Activated CD4-positive, alpha-beta memory T cell treated with anti-CD3 and anti-CD28 coated beads for 36 hours (primary cell): ENCODE measurements at regions of chr7 and their contacts with region 1.

Region 1: DNA sequence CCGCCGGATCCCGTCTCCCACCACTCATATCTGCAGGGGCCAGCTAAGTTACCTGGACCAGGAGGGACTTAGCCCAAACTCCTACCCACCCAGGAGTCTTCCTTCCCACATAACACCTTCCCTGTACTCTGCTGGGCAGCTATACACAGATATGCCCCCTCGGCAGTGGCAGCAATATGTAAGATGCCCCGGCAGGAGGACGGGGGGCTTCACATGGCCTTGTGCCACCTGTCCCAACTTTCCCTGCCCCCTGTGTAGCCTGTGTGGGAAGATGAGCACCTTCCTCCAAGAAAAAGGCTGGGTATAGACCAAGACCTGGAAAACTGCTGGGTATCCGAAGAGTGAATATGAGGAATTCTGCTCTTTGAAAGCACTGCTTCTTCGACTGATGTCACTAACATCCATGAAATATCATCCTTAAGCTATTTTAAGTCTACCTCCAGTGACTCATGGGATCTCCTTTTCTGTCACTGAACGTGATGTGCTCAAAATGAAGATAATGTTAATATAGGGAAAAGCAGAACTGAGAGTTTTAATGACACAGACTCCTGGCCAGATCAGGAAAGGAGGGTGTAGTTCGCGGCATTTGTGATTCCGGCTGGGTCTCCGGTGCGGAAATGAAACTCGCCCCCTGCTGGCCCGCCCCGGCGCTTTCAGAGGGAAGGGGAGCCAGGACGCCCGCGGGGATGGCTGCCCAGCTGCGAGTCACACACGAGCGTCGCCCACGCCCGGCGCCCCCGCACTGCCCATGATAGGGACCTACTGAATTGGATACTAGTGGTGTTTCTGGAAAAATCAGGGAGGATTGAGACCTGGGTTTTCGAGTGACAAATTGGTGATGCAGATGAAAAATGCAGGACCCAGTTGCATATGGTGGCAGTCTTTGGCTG is 256.9 kb upstream of the NFE2L3 start:
- DNase-seq: peak; percentile 75
- H3K4me3 Mint-ChIP-seq: peak overlapping the region; percentile 44
- H3K27ac Mint-ChIP-seq: no peak overlapping the region
- H3K4me1 Mint-ChIP-seq: peaks cover 26% of the 10 kb centered on the region
- H3K27me3 Mint-ChIP-seq: peaks cover 1% of the 10 kb centered on the region

Region 2: DNA sequence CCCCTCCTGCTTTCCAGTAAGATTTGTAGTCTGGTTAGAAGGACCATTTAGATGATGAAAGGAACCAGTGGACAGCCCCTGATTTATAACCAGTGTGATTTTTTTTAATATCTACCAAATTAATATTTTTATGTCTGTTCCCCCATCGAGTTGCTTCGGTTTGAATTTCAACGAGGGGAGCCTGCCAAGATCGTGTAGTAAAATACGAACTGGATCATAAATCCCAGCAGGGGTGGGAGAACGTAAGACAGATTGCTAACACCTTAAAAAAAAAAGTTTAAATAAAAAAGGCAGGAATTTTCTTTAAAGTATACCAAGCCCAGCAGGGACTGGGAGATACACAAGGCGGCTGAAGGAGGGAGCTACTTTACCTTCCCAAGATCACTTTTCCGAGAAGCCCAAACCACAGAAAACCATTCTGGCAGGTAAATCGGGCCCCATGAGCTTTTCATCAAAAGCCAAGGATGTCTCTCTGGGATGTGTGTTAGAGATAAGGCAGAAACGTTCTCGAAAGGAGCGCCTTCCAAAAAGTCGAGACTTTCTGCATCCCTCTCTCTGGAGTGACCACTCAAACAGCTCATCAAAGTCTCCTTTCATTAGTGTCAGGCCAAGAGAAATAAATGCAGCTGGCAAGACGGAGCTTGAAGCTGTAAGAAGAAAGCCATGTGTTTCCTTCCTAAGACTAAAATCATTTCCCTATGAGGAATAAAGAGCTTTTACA is 13.7 kb before region 1 on chr7:
- CTCF ChIA-PET with region 1: interaction called, 14 read pairs
- POLR2A ChIA-PET with region 1: no interaction called
- intact Hi-C with region 1: no loop called
- DNase-seq: no peak
- H3K4me3 Mint-ChIP-seq: no peak overlapping the region
- H3K27ac Mint-ChIP-seq: no peak overlapping the region
- H3K4me1 Mint-ChIP-seq: no peaks in the 10 kb centered on the region
- H3K27me3 Mint-ChIP-seq: peaks cover 20% of the 10 kb centered on the region

Region 3: DNA sequence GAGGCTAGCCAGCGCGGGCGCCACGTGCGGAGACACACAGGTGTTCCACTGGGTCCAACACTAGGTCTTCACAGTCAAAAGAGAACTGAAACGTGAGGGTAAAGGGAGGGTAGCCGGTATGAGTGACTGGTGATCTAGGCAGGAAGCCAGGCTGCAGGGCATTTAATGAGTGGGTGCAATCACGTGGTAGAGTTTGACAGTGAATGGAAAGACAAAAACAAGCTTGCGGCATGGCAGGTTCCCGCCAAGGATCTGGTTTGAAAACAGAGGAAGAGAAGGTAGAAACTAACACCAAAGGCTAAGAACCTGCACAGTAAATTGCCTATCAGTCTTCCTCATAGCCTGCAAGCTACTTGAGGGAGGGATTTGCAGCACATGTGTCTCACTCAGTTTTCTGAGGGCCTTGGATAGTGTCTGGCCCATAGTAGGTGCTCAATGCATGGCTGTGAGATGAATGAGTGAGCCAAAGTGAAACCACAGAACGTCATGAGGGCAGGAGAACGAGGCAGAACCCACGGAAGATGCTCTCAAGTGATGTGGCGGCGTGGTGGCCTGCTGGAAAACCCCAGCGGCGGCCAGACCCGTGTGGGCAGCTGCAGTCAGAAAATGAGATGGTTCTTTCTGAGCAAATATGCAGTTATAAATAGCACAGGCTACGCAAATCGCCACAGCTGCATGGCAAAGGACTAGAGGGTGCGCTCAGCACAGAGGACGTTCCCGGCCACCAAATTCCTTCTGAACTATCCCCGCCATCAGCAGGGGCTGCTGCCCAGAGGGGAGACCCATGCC is 73.3 kb after region 1 on chr7:
- CTCF ChIA-PET with region 1: interaction called, 7 read pairs
- POLR2A ChIA-PET with region 1: no interaction called
- intact Hi-C with region 1: loop called (anchors 2 kb)
- DNase-seq: peak; percentile 87
- H3K4me3 Mint-ChIP-seq: peak overlapping the region; percentile 7
- H3K27ac Mint-ChIP-seq: peak overlapping the region; percentile 55
- H3K4me1 Mint-ChIP-seq: peaks cover 23% of the 10 kb centered on the region
- H3K27me3 Mint-ChIP-seq: peaks cover 31% of the 10 kb centered on the region

Region 4: GRCh38 chr7:26090927-26091519 is 195.9 kb after region 1 on chr7:
- CTCF ChIA-PET with region 1: interaction called, 17 read pairs
- POLR2A ChIA-PET with region 1: no interaction called
- intact Hi-C with region 1: no loop called
- DNase-seq: no peak
- H3K4me3 Mint-ChIP-seq: no peak overlapping the region
- H3K27ac Mint-ChIP-seq: no peak overlapping the region
- H3K4me1 Mint-ChIP-seq: peaks cover 14% of the 10 kb centered on the region
- H3K27me3 Mint-ChIP-seq: no peaks in the 10 kb centered on the region

Region 5: DNA sequence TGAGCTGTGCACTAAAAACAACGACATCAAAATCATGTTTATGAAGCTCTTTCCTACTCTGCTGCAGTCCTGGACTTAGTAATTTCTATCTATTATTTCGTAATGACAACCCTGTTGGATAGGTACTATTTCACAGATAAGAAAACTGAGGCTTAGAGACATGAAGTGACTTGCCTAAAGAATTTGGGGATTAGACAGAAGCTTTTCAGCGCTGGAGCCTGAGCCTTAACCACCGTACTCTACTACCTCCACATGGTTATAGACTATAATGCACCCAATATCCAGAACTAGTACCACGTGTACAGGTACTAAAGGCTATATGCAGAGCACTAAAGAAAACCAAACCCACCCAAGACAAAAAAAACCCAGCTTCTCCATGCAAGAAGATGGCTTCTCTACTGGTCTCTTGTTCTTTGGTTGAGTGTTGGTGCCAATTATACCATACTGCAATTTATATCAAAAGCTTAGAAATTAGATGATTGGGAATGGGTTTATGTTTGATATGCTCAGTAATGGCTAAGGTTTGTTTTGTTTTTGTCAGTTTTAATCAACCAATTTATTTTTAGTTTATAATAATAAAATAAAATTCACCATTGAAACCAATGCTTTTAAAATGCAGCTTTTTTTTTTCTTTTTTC is 390.0 kb after region 1 on chr7:
- CTCF ChIA-PET with region 1: interaction called, 11 read pairs
- POLR2A ChIA-PET with region 1: no interaction called
- intact Hi-C with region 1: loop called (anchors 2 kb)
- DNase-seq: peak; percentile 25
- H3K4me3 Mint-ChIP-seq: no peak overlapping the region
- H3K27ac Mint-ChIP-seq: no peak overlapping the region
- H3K4me1 Mint-ChIP-seq: peaks cover 10% of the 10 kb centered on the region
- H3K27me3 Mint-ChIP-seq: no peaks in the 10 kb centered on the region

Region 6: GRCh38 chr7:26667500-26668133 is 772.5 kb after region 1 on chr7:
- CTCF ChIA-PET with region 1: interaction called, 13 read pairs
- POLR2A ChIA-PET with region 1: no interaction called
- intact Hi-C with region 1: loop called (anchors 1 kb)
- DNase-seq: peak; percentile 61
- H3K4me3 Mint-ChIP-seq: no peak overlapping the region
- H3K27ac Mint-ChIP-seq: no peak overlapping the region
- H3K4me1 Mint-ChIP-seq: peaks cover 19% of the 10 kb centered on the region
- H3K27me3 Mint-ChIP-seq: no peaks in the 10 kb centered on the region